A549 (cell line): ENCODE measurements at regions of chr19 and their contacts with region 1.

Region 1: DNA sequence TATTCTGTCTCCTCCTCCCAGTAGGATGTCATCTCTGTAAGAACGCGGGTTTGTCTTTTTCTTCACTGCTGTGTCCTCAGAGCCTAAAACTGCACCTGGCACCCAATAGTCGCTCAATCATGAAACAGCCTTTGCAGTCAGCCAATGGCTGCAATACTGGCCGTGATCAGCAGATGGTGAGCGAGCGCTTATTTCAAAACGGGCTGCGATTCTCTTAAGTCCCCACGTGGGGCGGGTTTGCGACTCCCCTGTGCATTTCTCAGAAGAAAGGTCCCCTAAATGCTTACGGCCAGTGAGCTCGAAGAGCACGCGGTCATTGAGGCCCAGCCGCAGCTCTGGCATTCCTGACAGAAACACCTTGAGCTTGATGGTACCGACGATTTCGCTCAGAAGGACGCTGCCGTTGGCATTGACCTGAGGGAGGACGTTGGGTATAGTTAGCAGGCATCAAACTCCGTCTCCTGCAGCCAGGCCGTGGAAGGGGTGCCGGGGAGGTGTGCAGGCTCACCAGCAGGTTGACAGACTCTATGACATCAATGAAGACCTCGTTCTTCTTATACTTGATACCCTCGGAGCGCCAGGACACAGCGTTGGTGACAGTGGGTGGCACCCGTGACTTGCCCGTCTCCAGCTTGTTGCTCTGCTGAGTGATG is 6.0 kb downstream of the AP1M2 start:
- DNase-seq: peak; percentile 56 to 91
- ATAC-seq: peak; percentile 66 to 71
- H3K4me3 ChIP-seq: no peak overlapping the region
- H3K27ac ChIP-seq: peak overlapping the region in 1 of 2 experiments; percentile 53; a peak in 1 of 6 replicates
- H3K4me1 ChIP-seq: 0 out of 3 replicates have a peak, but pooled peaks cover 5% of the 10 kb centered on the region
- CTCF ChIP-seq: peak; percentile 75
- EP300 ChIP-seq: no peak
- POLR2A ChIP-seq: no peak
- RAD21 ChIP-seq: peak; percentile 87 to 93

Region 2: DNA sequence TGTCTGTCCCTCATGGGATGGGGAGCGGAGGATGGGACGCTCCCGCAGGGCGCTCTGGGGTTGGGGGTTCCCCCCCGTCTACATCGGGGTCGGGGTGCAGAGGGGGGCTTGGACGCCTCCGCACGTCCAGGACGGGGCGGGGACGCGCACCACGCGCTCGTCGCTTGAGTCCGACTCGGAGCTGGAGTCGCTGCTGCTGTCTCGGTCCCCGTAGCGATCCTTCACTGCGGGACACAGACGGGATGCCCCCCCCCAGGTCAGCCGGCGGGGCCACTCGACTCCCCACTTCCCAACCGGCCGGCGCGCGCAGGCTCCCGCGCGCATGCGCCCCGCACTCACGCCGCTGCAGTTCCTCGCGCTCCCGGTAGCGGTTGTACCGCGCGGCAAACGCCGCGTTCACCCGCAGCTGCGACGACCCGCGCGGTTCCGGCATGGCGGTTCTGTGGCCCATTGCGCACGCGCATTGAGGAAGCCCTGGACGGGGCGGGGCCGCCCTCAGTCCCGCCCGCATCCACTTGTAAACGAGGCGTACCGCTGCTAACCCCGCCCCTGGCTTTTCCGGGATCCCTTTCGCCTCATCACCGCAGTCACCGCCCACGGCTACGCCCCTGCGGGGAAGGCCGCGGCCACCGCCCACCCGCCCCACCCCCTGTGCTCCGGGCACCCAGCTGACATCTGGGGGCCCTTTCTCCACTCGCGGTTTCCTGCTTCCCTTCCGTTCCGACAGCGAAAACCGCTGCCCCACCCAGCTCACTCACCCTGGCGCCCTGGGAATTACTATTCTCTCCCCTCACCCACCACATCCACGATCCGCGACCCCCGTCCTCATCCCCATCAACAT is 15.3 kb before region 1 on chr19 and contains the start of gene KRI1:
- CTCF ChIA-PET with region 1: interaction called, 12 read pairs
- POLR2A ChIA-PET with region 1: no interaction called
- DNase-seq: peak; percentile 90 to 95
- ATAC-seq: peak; percentile 68 to 77
- H3K4me3 ChIP-seq: peak within 1 kb of the TSS; percentile 75
- H3K27ac ChIP-seq: peak within 1 kb of the TSS; percentile 81 to 96
- H3K4me1 ChIP-seq: peaks cover 25% of the 10 kb centered on the region
- CTCF ChIP-seq: no peak
- EP300 ChIP-seq: no peak
- POLR2A ChIP-seq: peak; percentile 89
- RAD21 ChIP-seq: no peak
- polyA plus RNA-seq, gene KRI1: 10.6 and 21.6 TPM in 2 replicates

Region 3: DNA sequence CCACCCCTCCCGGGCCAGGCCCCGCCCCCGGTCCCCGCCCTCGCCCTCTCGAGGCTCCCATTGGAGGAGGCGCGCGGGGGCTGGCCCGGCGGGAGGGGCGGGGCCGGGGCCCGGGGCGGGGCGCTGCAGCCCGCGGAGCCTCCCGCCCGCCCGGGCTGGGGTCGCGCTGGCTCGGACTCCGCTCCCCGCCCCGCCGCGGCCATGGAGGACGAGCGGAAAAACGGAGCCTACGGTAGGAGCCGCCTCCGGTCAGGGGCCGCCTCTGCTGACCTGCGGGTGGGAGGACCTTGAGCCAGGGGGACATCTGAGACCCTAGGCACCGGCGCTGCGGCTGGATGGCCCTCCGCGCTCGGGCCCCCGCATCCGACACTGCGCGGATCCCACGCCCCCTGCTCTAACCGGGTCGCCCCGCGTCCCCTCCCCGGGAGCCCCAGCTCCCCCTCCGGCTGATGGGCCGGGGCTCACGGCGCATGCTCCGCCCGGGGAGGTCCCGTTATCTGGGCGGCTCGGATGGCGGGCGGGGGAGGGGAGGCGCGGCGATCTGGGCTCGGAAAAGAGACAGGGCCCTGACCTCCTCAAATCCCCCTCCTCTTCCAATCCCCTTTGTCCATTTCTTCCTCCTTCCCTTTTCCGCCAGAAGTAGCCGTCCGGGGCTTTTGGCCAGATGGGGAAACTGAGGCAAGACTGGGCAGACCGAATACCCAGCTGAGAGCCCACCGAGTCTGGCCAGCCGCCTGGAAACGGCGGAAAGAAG is 21.4 kb after region 1 on chr19:
- CTCF ChIA-PET with region 1: interaction called, 22 read pairs
- POLR2A ChIA-PET with region 1: no interaction called
- DNase-seq: peak; percentile 63 to 83
- ATAC-seq: peak; percentile 96 to 98
- H3K4me3 ChIP-seq: peak overlapping the region; percentile 95
- H3K27ac ChIP-seq: peak overlapping the region; percentile 78 to 90
- H3K4me1 ChIP-seq: peaks cover 8% of the 10 kb centered on the region
- CTCF ChIP-seq: no peak
- EP300 ChIP-seq: no peak
- POLR2A ChIP-seq: no peak
- RAD21 ChIP-seq: no peak

Region 4: GRCh38 chr19:10625003-10625776 is 44.1 kb after region 1 on chr19 and contains the start of gene SLC44A2:
- CTCF ChIA-PET with region 1: interaction called, 14 read pairs
- POLR2A ChIA-PET with region 1: interaction called, 5 read pairs
- DNase-seq: peak in 1 of 2 experiments; percentile 46
- ATAC-seq: peak; percentile 87 to 91
- H3K4me3 ChIP-seq: peak within 1 kb of the TSS; percentile 49
- H3K27ac ChIP-seq: peak within 1 kb of the TSS; percentile 74 to 90
- H3K4me1 ChIP-seq: 0 out of 3 replicates have a peak, but pooled peaks cover 4% of the 10 kb centered on the region
- CTCF ChIP-seq: no peak
- EP300 ChIP-seq: no peak
- POLR2A ChIP-seq: no peak
- RAD21 ChIP-seq: no peak
- polyA plus RNA-seq, gene SLC44A2: 8.3 and 10.3 TPM in 2 replicates

Region 5: GRCh38 chr19:10644260-10645007 is 63.3 kb after region 1 on chr19:
- CTCF ChIA-PET with region 1: interaction called, 296 read pairs
- POLR2A ChIA-PET with region 1: interaction called, 9 read pairs
- DNase-seq: peak; percentile 63 to 91
- ATAC-seq: peak; percentile 95 to 97
- H3K4me3 ChIP-seq: no peak overlapping the region
- H3K27ac ChIP-seq: 0 out of 6 replicates have a peak overlapping the region, but pooled peaks of 1 of the 2 experiments have one; percentile 41
- H3K4me1 ChIP-seq: no peaks in the 10 kb centered on the region
- CTCF ChIP-seq: peak; percentile 68
- EP300 ChIP-seq: no peak
- POLR2A ChIP-seq: no peak
- RAD21 ChIP-seq: peak; percentile 79 to 88

Region 6: DNA sequence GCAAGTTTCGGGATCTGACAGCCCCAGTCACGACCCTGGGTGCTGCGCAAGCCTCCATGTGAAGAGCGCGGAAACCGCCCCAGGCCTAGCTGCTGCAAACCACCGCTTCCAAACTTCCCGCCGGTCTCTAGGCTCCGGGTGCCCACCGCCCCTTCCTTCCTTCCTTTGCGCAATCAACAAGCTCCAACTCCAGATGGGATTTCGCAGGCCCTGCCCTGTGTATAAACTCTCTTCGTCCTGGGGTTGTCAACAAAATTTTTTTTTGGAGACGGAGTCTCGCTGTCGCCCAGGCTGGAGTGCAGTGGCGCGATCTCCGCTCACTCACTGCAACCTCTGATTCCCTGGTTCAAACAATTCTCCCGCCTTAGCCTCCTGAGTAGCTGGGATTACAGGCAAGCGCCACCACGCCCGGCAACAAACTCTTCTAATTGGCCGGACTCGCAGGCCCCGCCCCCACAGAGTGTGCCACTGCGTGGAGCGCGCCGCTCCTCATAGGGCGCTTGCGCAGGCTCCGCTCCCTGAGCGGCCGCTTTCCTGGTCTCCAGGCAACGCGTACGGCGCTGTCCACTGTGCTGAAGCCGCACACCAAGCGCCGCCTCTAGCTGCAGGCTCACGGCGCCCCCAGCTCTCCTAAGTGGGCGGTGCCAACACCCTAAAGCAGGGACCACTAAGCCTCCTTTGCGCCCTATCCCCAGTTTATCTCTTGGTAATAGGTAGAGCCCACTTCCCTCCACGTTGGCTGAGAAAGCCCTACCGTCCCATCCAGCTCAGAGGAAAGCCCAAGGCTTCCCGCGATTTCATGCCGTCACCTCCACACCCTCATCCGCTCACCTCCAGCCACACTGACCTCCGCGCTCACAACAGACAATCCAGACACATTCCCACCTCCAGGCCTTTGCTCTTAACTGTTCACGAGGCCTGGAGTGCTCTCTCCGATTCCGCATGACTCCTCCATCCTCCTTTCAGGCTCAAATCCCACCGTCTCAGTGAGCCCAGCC is 114.6 kb after region 1 on chr19:
- CTCF ChIA-PET with region 1: interaction called, 65 read pairs
- POLR2A ChIA-PET with region 1: no interaction called
- DNase-seq: peak; percentile 78 to 92
- ATAC-seq: peak; percentile 92
- H3K4me3 ChIP-seq: peak overlapping the region; percentile 18; the same call in 1 of the 3 replicates
- H3K27ac ChIP-seq: no peak overlapping the region
- H3K4me1 ChIP-seq: peaks cover 9% of the 10 kb centered on the region; the same call in 1 of the 3 replicates
- CTCF ChIP-seq: no peak
- EP300 ChIP-seq: no peak
- POLR2A ChIP-seq: no peak
- RAD21 ChIP-seq: no peak

Region 7: DNA sequence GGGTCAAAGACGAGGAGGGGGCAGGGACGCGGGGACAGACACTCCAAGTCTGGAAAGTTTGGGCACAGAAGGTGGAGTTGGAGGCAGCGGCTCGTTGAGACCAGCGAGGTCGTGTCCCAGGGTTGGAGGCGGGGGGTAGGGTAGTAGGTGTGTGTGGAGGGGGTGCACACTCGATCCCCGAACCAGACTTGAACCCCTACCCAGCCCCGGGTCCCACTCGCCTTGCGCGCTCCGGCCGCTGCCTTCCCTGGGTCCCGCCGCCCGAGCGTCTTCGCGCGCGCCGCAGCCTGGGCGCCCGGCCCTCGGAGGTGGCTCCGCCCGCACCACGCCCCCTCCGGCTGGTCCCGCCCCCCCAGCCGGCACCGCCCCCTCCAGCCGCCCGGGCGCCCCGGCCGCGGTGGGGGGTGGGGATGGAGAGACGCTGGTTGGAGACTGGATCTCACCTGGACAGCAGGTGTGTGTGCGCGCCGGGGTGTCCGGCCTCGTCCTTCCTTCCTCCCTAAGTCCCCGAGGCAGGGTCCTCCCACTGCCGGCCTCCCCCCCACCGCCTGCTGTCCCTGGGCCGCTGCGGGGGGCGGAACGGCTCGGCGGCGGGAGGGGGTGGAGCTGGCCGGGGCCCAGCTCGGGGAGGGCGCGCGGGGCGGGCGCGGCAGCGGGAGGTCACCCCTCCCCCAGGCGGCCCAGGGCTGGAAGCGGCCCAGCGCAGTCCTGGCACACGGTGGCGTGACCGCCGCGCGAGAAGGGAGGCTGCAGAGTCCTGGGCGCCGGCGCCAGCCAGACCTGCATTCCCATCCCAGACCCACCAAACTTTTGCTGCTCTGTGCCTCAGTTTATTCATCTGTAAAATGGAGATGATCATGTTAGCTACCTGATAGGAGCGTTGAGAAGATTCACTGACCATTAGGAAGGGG is 616.4 kb after region 1 on chr19 and contains the start of gene KANK2:
- CTCF ChIA-PET with region 1: no interaction called
- POLR2A ChIA-PET with region 1: no interaction called
- DNase-seq: peak; percentile 75 to 77
- ATAC-seq: peak; percentile 84 to 86
- H3K4me3 ChIP-seq: peak within 1 kb of the TSS; percentile 66
- H3K27ac ChIP-seq: peak within 1 kb of the TSS; percentile 92 to 98
- H3K4me1 ChIP-seq: peaks cover 37% of the 10 kb centered on the region
- CTCF ChIP-seq: peak; percentile 5; the same call in 1 of the 3 replicates
- EP300 ChIP-seq: peak in 1 of 2 experiments; percentile 36; a peak in 2 of 5 replicates
- POLR2A ChIP-seq: peak; percentile 60
- RAD21 ChIP-seq: no peak
- polyA plus RNA-seq, gene KANK2: 20.5 and 35.5 TPM in 2 replicates